Dorsolateral prefrontal cortex (tissue), 120 donors: ENCODE measurements at regions of chr10 and their contacts with region 1.

Region 1: GRCh38 chr10:95907456-95908253 is at the start of gene CC2D2B:
- DNase-seq: peak; percentile 78 to 91 (median 86)
- H3K4me3 ChIP-seq: peak within 1 kb of the TSS; percentile 60 to 90 (median 79)
- H3K27ac ChIP-seq: peak within 1 kb of the TSS; percentile 10 to 93 (median 83)
- H3K27me3 ChIP-seq: no peaks in the 10 kb centered on the region
- CTCF ChIP-seq: peak in 32 of 56 donors; percentile 3 to 51 (median 21)
- total RNA-seq, gene CC2D2B: 1.1 to 10.2 (median 4.1) TPM

Region 2: DNA sequence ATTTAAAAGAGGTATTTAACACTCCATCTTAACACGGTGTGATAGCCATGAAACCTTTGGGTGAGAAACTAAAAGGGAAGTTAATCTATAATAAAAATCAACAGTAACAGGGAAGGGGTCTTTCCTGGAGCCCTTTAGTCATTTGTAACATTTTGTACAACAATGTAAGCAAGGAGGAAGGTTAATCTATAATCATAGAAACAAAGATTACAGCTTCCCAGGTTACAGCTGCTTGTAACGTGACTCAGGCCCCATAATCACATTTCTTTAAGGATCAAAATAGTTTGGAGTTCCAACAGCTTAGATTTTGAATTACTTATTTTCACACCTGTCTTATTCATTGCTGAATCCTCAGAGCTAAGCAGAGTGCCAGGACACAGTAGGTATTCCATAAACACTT is 17.8 kb before region 1 on chr10:
- intact Hi-C with region 1: no loop called
- DNase-seq: no peak
- H3K4me3 ChIP-seq: no peak overlapping the region
- H3K27ac ChIP-seq: no peak overlapping the region
- H3K27me3 ChIP-seq: no peaks in the 10 kb centered on the region
- CTCF ChIP-seq: no peak

Region 3: GRCh38 chr10:96427291-96427690 is 519.6 kb after region 1 on chr10:
- intact Hi-C with region 1: loop called in 1 of 2 experiments (anchors 5 kb)
- DNase-seq: no peak
- H3K4me3 ChIP-seq: no peak overlapping the region
- H3K27ac ChIP-seq: no peak overlapping the region
- H3K27me3 ChIP-seq: peaks cover 0 to 6% (median 0%) of the 10 kb centered on the region in 45 donors
- CTCF ChIP-seq: no peak